ENCODE measurements at regions of chr3 and their contacts with region 1.

Region 1: DNA sequence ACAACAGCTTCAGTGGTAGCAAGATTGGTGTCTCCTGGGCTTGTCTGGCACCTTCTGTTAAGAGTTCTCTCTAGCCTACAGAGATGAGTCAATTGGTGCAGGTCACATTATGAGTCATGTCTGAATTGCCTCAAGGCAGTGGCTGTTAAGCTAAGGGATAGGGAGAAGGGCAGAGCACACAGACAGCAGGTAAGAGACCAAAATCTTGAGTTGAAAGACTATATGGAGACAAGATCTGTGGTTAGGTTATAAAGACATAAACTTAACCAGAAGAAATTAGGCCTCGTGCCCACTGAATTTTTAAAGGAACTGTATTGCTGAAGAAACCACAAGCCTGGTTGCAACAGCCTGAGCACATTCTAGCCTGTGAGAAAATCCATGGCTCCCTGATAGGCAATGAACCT is 19.2 kb upstream of the KPNA1 start:
- DNase-seq: peak; percentile 53
- H3K4me3 Mint-ChIP-seq: no peak overlapping the region
- H3K27ac Mint-ChIP-seq: no peak overlapping the region
- H3K4me1 Mint-ChIP-seq: peaks cover 54% of the 10 kb centered on the region
- H3K27me3 Mint-ChIP-seq: no peaks in the 10 kb centered on the region

Region 2: DNA sequence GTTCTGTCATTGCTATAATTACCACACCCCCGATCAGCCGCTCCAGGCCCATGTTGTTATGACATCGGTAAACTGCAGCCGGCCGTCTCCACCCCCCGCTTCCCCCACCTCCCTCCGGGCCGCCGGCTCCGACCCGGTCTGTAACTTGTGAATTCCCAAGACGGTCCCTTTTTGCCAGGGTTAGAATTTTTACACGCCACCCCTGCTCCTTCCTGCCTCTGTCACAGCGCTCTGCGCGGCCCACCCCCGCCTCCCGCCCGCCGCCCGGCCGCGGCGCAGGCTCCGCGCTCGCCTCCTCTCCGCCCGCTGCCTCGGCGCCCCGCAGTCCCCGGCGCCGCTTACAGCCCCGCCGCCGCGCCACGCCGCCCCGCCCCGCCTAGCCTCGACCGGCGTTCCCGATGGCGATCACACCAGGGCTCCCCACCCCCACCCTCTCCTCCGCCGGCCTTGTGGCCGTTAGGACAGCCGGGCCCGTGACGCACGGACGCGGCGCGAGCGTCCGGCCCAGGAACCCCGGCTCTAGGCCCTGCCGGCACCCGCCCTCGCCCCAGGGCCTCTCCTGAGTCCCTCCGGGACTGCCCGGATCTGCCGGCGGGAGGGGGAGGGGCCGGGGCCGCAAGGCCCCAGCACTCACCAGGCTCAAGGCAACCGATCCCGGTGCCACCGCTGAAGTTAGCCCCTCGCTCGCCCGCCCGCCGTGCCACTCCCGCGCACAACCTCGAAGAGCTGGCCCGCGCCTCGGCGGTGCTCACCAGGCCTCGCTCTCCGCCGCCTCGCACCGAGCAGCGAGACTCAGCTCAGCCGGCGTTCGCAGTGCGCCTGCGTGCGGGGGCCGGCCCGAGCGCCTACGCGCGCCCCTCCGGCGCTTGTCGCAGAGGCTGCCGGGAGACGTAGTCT is 19.6 kb before region 1 on chr3 and contains the start of gene KPNA1:
- CTCF ChIA-PET with region 1: interaction called, 3 read pairs
- POLR2A ChIA-PET with region 1: interaction called, 13 read pairs
- DNase-seq: peak; percentile 89
- H3K4me3 Mint-ChIP-seq: peak within 1 kb of the TSS; percentile 78
- H3K27ac Mint-ChIP-seq: peak within 1 kb of the TSS; percentile 77
- H3K4me1 Mint-ChIP-seq: peaks cover 28% of the 10 kb centered on the region
- H3K27me3 Mint-ChIP-seq: peaks cover 5% of the 10 kb centered on the region
- total RNA-seq, gene KPNA1: 41.8 to 45.8 TPM

Measured in activated CD4-positive, alpha-beta memory T cell treated with anti-CD3 and anti-CD28 coated beads, Interleukin-2, amount 10 ng/mL, durations not matched to agents 7 days and 5 days (primary cell).